Activated CD8-positive, alpha-beta T cell treated with anti-CD3 and anti-CD28 coated beads, Interleukin-2, amount 10 ng/mL, durations not matched to agents 7 days and 5 days (primary cell): ENCODE measurements at regions of chr1 and their contacts with region 1.

Region 1: DNA sequence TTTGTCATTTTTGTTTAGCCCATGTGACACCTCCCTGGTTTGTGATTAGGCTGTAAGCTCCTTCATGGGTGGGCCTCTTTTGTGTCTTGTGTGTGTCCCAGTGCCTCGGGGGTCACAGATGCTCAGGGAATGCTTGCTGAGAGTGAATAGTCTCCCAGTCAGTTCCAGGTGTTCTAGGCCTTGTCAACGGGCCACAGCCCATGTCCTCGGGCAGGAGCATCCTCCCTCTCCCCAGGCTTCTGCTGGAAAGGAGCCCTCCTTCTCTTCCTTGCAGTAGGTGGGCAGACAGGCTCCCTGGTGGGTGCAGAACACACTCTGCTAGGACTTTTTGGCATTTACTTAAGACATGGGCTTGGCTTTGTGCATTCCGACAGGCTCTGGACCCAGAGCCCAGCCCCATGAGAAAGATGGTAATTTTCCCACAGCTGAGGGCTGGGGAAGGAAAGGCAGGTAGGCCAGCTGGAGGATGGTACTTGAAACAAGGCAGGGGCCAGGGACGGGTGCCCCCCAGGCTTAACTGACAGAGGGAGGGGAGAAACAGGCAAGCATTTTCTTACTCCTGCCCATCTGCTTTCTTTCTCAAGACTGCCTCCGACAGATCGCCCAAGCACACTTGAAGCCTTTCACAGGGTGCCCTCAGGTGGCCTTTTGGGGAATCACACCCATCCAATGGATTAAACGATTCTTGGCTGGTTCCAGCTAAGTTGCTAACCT is 7.1 kb upstream of the CPLANE2 start:
- DNase-seq: peak; percentile 86
- ATAC-seq: peak; percentile 82
- H3K4me3 Mint-ChIP-seq: no peak overlapping the region
- H3K27ac Mint-ChIP-seq: no peak overlapping the region
- H3K4me1 Mint-ChIP-seq: peaks cover 16% of the 10 kb centered on the region
- H3K27me3 Mint-ChIP-seq: no peaks in the 10 kb centered on the region

Region 2: GRCh38 chr1:16187748-16188401 is 56.2 kb before region 1 on chr1:
- CTCF ChIA-PET with region 1: interaction called, 19 read pairs
- POLR2A ChIA-PET with region 1: no interaction called
- DNase-seq: peak; percentile 81
- ATAC-seq: peak; percentile 93
- H3K4me3 Mint-ChIP-seq: no peak overlapping the region
- H3K27ac Mint-ChIP-seq: no peak overlapping the region
- H3K4me1 Mint-ChIP-seq: no peaks in the 10 kb centered on the region
- H3K27me3 Mint-ChIP-seq: peaks cover 10% of the 10 kb centered on the region

Region 3: DNA sequence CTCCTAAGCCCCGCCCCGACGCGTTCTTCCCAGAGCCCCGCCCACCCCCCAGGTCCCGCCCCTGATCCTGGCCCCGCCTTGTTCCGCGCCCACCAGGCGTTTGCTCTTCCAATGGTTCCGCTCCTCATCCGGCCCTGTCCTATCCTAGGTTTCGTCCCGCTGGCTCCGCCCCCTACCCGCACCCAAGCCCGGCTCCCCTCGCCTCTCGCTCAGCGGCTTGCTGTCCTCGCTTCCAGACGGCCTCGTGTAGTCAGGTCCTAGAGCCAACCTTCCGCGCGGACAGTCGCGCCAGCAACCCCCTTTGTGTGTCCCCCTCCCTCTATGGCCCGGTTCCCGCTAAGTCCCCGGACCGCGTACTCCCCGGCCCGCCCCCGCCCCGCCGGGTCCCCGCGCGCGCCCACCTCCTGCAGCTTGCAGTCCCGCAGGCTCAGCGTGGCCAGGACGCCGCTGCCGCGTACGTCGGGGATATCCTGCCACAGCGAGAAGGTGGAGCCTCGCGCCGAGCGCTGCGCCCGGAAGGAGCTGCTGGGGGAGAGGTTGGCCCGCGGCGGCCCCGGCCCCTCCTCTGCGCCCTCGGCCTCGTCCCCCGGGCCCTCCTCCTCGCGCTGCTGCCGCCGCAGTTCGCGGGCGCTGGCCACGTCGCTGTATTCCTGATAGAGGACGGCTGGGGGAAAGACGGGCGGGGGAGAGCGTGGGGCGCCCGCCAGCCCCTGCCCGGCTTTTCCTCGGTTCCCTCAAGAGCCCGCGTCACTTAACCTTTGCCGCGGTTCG is 37.4 kb before region 1 on chr1:
- CTCF ChIA-PET with region 1: interaction called, 18 read pairs
- POLR2A ChIA-PET with region 1: interaction called, 6 read pairs
- DNase-seq: peak; percentile 97
- ATAC-seq: peak; percentile 94
- H3K4me3 Mint-ChIP-seq: peak overlapping the region; percentile 77
- H3K27ac Mint-ChIP-seq: peak overlapping the region; percentile 98
- H3K4me1 Mint-ChIP-seq: peaks cover 11% of the 10 kb centered on the region
- H3K27me3 Mint-ChIP-seq: peaks cover under 1% of the 10 kb centered on the region

Region 4: DNA sequence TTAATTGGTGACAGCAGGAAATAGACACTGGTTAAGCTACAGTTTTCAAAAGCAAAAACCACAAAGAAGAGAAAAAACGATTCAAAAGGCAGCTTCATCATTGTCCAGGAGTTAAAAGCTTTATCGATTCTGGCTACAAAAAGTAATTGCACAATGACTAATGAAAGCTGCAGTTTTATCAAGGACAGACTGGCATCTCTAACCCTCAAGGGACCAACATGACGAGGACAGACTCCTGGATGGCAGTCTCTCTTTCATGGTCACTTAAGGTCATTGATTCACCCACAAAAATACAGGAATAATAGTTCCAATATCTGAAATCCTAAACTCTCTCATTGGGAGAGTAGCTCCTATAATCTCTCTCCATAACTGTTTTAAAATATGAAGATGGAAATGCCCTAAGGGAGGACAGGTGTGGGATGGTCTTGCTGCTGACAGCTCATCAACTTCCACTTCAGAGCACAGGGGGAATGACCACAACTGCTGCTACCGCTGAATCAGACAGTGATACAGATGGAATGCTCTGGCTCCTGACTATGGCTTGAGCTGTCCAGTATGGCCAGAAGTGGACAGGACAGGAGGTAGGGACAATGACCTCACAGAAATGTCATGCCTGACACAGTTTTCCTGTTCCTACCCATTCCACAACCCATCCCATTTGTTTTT is 10.3 kb after region 1 on chr1:
- CTCF ChIA-PET with region 1: interaction called, 12 read pairs
- POLR2A ChIA-PET with region 1: no interaction called
- DNase-seq: no peak
- ATAC-seq: no peak
- H3K4me3 Mint-ChIP-seq: no peak overlapping the region
- H3K27ac Mint-ChIP-seq: no peak overlapping the region
- H3K4me1 Mint-ChIP-seq: peaks cover 23% of the 10 kb centered on the region
- H3K27me3 Mint-ChIP-seq: no peaks in the 10 kb centered on the region

Region 5: DNA sequence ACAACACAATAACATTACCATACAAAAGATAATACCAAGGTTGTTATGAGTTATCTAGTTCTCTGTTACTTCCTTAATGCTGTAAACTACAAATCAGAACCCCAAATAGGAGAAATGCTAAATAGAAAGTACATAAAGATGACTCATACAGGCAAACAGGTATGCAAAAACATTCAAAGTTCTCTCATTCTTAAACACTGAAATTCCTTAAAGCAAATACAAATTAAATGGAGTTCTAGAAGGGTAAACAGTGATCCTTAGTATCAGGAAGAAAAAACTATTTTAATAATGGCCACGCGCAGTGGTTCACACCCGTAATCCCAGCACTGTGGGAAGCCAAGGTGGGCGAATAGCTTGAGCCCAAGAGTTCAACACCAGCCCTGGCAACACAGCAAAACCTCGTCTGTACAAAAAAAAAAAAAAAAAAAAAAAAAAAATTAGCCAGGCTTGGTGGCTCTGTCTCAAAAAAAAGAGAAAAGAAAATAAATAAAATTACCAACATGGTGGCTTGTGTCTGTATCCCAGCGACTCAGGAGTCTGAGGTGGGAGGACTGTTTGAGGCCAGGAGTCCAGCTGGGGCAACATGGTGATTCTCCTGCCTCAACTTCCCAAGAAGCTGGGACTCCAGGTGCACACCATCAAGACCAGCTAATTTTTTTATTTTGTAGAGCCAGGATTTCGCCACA is 90.7 kb after region 1 on chr1:
- CTCF ChIA-PET with region 1: no interaction called
- POLR2A ChIA-PET with region 1: no interaction called
- DNase-seq: no peak
- ATAC-seq: no peak
- H3K4me3 Mint-ChIP-seq: no peak overlapping the region
- H3K27ac Mint-ChIP-seq: no peak overlapping the region
- H3K4me1 Mint-ChIP-seq: peaks cover 14% of the 10 kb centered on the region
- H3K27me3 Mint-ChIP-seq: no peaks in the 10 kb centered on the region